Activated CD4-positive, alpha-beta T cell treated with anti-CD3 and anti-CD28 coated beads for 36 hours (primary cell): ENCODE measurements at regions of chr12 and their contacts with region 1.

Region 1: DNA sequence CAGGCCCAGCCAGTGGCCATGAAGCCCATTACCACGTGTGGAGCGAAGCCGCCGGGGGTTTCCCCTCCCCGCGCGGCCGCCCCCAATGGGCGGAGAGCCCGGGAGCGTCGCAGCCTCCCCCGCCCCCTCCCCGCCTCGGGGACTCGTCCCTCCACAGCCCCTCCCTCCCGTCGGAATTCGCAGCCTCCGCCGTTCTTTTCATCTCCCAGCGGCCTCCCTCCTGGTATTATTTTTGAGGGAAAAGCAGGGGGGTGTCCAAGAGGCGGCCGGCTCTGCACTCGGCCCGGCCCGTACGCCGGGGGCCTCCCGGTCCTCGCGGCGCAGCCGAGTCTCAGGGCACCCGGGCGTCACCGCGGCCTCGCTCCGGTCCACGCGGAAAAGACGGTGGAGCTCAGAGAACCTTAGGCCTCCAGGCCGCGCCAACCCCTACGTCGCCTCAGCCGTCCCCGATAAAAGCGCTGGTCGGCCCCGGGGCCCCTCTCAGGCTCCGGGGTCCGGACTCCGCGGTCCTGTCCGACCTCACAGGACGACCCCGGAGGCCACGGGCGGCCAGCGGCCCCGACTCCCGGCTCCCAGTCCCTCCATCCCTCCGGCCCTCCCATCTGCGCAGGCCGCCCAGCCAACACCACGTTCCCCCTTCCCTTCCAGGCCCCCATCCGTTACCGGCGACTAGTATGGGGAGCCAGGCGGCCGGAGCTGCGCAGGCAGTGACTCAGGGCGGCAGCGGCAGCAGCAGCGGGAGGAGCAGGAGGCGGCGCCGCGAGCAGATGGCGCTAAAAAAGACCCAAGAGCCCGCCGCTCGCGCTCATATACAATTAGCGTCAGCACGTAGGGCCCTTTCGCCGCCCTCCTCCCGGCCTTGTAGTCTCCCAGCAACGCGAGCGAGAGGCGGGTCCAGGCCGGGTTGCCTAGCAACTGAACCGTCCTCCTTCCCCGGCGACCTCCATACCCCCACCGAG is at the start of gene NAP1L1:
- DNase-seq: peak; percentile 98
- ATAC-seq: peak; percentile 86
- H3K4me3 Mint-ChIP-seq: peak within 1 kb of the TSS; percentile 79
- H3K27ac Mint-ChIP-seq: peak within 1 kb of the TSS; percentile 98
- H3K4me1 Mint-ChIP-seq: peaks cover 44% of the 10 kb centered on the region
- H3K27me3 Mint-ChIP-seq: no peaks in the 10 kb centered on the region
- total RNA-seq, gene NAP1L1: 959 to 1,004 TPM

Region 2: DNA sequence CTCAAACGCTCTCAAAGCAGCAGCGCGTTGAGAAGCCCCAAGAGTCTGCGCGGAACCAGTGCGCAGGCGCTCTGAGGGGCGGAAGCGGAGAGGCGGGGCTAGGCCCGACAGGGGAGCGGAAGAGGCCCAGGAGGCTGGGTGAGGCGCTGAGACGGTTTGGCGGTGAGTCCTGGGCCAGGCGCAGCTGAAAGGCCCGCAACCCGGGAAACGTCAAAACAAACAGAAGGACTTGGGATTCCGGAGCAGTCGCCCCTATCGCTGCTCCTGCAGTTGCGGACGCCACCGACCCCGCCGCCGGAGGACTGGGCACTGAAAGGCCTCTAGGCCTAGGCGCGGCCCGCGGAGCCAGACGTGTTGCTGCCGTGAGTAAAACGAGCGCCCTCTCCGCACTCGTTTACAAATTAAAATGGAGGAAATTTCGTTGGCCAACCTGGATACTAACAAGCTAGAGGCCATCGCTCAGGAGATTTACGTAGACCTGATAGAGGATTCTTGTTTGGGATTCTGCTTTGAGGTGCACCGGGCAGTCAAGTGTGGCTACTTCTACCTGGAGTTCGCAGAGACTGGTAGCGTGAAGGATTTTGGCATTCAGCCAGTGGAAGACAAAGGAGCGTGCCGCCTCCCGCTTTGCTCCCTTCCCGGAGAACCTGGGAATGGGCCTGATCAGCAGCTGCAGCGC is 1546.3 kb before region 1 on chr12 and contains the start of gene ATXN7L3B:
- CTCF ChIA-PET with region 1: no interaction called
- POLR2A ChIA-PET with region 1: no interaction called
- intact Hi-C with region 1: loop called in 1 of 2 experiments (anchors 5 kb)
- DNase-seq: peak; percentile 96
- ATAC-seq: peak; percentile 96
- H3K4me3 Mint-ChIP-seq: peak within 1 kb of the TSS; percentile 97
- H3K27ac Mint-ChIP-seq: peak within 1 kb of the TSS; percentile 97
- H3K4me1 Mint-ChIP-seq: peaks cover 50% of the 10 kb centered on the region
- H3K27me3 Mint-ChIP-seq: no peaks in the 10 kb centered on the region
- total RNA-seq, gene ATXN7L3B: 16.4 to 19.7 TPM

Region 3: GRCh38 chr12:75480469-75480949 is 603.7 kb before region 1 on chr12 and contains the start of gene GLIPR1:
- CTCF ChIA-PET with region 1: no interaction called
- POLR2A ChIA-PET with region 1: interaction called, 5 read pairs
- intact Hi-C with region 1: loop called in 1 of 2 experiments (anchors 1 kb)
- DNase-seq: peak; percentile 86
- ATAC-seq: peak; percentile 83
- H3K4me3 Mint-ChIP-seq: peak within 1 kb of the TSS; percentile 93
- H3K27ac Mint-ChIP-seq: peak within 1 kb of the TSS; percentile 89
- H3K4me1 Mint-ChIP-seq: peaks cover 90% of the 10 kb centered on the region
- H3K27me3 Mint-ChIP-seq: no peaks in the 10 kb centered on the region
- total RNA-seq, gene GLIPR1: 8.7 to 9.3 TPM

Region 4: GRCh38 chr12:75784591-75784990 is 299.6 kb before region 1 on chr12:
- CTCF ChIA-PET with region 1: no interaction called
- POLR2A ChIA-PET with region 1: no interaction called
- intact Hi-C with region 1: no loop called
- DNase-seq: no peak
- ATAC-seq: no peak
- H3K4me3 Mint-ChIP-seq: no peak overlapping the region
- H3K27ac Mint-ChIP-seq: no peak overlapping the region
- H3K4me1 Mint-ChIP-seq: peaks cover 11% of the 10 kb centered on the region
- H3K27me3 Mint-ChIP-seq: peaks cover 18% of the 10 kb centered on the region

Region 5: GRCh38 chr12:76020731-76021672 is 63.2 kb before region 1 on chr12:
- CTCF ChIA-PET with region 1: no interaction called
- POLR2A ChIA-PET with region 1: interaction called, 3 read pairs
- intact Hi-C with region 1: loop called (anchors 1 to 2 kb)
- DNase-seq: peak; percentile 88
- ATAC-seq: peak; percentile 79
- H3K4me3 Mint-ChIP-seq: peak overlapping the region; percentile 54
- H3K27ac Mint-ChIP-seq: peak overlapping the region; percentile 99
- H3K4me1 Mint-ChIP-seq: peaks cover 56% of the 10 kb centered on the region
- H3K27me3 Mint-ChIP-seq: peaks cover 1% of the 10 kb centered on the region

Region 6: DNA sequence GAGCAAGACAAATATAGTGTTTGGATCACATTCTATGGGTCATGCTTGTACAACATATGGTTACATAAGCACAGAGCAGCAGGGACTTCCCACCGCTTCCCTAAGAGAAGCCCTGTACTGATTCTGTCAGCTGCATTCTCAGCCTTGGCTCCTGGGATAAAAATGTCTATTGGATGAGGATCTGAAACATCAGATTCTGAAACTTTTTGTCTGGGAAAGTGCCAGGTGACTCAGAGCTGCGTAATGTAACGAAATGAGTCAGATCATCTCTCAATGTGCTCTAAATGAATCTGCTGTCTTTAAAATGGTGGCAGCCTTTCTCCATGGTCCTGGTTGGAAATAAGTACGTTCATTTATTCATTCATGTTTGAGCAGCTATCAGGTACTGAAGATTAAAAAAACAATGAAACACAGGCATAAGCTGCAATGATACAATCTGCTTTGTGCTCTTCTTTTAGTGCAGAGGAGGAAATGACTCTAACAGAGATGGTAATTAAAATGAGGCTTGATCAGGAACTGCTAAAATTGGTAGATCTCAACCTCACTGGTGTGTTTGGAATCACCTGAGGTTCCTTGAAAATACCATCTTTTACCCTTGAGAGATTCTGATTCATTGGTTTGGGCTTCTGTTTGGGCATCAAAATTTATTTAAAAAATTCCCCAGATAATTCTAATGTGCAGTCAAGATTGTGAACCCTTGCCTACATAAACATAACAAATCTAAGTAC is 99.4 kb after region 1 on chr12:
- CTCF ChIA-PET with region 1: no interaction called
- POLR2A ChIA-PET with region 1: no interaction called
- intact Hi-C with region 1: loop called in 1 of 2 experiments (anchors 1 kb)
- DNase-seq: peak; percentile 75
- ATAC-seq: peak; percentile 94
- H3K4me3 Mint-ChIP-seq: no peak overlapping the region
- H3K27ac Mint-ChIP-seq: peak overlapping the region; percentile 68
- H3K4me1 Mint-ChIP-seq: peaks cover 12% of the 10 kb centered on the region
- H3K27me3 Mint-ChIP-seq: peaks cover 49% of the 10 kb centered on the region

Region 7: GRCh38 chr12:76455582-76456345 is 371.6 kb after region 1 on chr12:
- CTCF ChIA-PET with region 1: no interaction called
- POLR2A ChIA-PET with region 1: no interaction called
- intact Hi-C with region 1: loop called (anchors 1 kb)
- DNase-seq: peak; percentile 31
- ATAC-seq: peak; percentile 99
- H3K4me3 Mint-ChIP-seq: no peak overlapping the region
- H3K27ac Mint-ChIP-seq: no peak overlapping the region
- H3K4me1 Mint-ChIP-seq: peaks cover 33% of the 10 kb centered on the region
- H3K27me3 Mint-ChIP-seq: no peaks in the 10 kb centered on the region

Region 8: GRCh38 chr12:77065361-77066204 is 981.4 kb after region 1 on chr12 and contains the start of gene E2F7:
- CTCF ChIA-PET with region 1: no interaction called
- POLR2A ChIA-PET with region 1: no interaction called
- intact Hi-C with region 1: loop called in 1 of 2 experiments (anchors 5 kb)
- DNase-seq: peak; percentile 92
- ATAC-seq: peak; percentile 96
- H3K4me3 Mint-ChIP-seq: peak within 1 kb of the TSS; percentile 76
- H3K27ac Mint-ChIP-seq: peak within 1 kb of the TSS; percentile 63
- H3K4me1 Mint-ChIP-seq: peaks cover 11% of the 10 kb centered on the region
- H3K27me3 Mint-ChIP-seq: peaks cover 23% of the 10 kb centered on the region
- total RNA-seq, gene E2F7: 6.0 to 7.8 TPM